ENCODE measurements at regions of chr10 and their contacts with region 1.

Region 1: GRCh38 chr10:100535715-100536353 is at the start of gene HIF1AN:
- DNase-seq: peak; percentile 86
- ATAC-seq: peak; percentile 98
- H3K4me3 Mint-ChIP-seq: no peak within 1 kb of the TSS
- H3K27ac Mint-ChIP-seq: peak within 1 kb of the TSS; percentile 73
- H3K4me1 Mint-ChIP-seq: peaks cover 7% of the 10 kb centered on the region; the same call in 1 of the 2 replicates
- H3K27me3 Mint-ChIP-seq: no peaks in the 10 kb centered on the region
- CTCF ChIP-seq: peak; percentile 69
- total RNA-seq, gene HIF1AN: 49.9 to 58.3 TPM (median 53.9 TPM) in 3 replicates

Region 2: GRCh38 chr10:100554902-100555301 is 19.1 kb after region 1 on chr10:
- CTCF ChIA-PET with region 1: interaction called, 13 read pairs
- POLR2A ChIA-PET with region 1: no interaction called
- DNase-seq: no peak
- ATAC-seq: no peak
- H3K4me3 Mint-ChIP-seq: no peak overlapping the region
- H3K27ac Mint-ChIP-seq: no peak overlapping the region
- H3K4me1 Mint-ChIP-seq: no peaks in the 10 kb centered on the region
- H3K27me3 Mint-ChIP-seq: no peaks in the 10 kb centered on the region
- CTCF ChIP-seq: no peak

Measured in WTC11 (cell line).